Heart right ventricle (tissue), 16 donors: ENCODE measurements at regions of chr12 and their contacts with region 1.

Region 1: GRCh38 chr12:13114251-13115052 is 11.0 kb upstream of the GSG1 start:
- DNase-seq: no peak
- ATAC-seq: peak in 6 of 8 donors; percentile 13 to 45 (median 33)
- H3K4me3 ChIP-seq: no peak overlapping the region
- H3K27ac ChIP-seq: peak overlapping the region in 4 of 10 donors; percentile 9 to 44 (median 31)
- H3K4me1 ChIP-seq: peaks cover 7 to 46% (median 27%) of the 10 kb centered on the region in 9 donors
- H3K27me3 ChIP-seq: no peaks in the 10 kb centered on the region
- CTCF ChIP-seq: no peak

Region 2: DNA sequence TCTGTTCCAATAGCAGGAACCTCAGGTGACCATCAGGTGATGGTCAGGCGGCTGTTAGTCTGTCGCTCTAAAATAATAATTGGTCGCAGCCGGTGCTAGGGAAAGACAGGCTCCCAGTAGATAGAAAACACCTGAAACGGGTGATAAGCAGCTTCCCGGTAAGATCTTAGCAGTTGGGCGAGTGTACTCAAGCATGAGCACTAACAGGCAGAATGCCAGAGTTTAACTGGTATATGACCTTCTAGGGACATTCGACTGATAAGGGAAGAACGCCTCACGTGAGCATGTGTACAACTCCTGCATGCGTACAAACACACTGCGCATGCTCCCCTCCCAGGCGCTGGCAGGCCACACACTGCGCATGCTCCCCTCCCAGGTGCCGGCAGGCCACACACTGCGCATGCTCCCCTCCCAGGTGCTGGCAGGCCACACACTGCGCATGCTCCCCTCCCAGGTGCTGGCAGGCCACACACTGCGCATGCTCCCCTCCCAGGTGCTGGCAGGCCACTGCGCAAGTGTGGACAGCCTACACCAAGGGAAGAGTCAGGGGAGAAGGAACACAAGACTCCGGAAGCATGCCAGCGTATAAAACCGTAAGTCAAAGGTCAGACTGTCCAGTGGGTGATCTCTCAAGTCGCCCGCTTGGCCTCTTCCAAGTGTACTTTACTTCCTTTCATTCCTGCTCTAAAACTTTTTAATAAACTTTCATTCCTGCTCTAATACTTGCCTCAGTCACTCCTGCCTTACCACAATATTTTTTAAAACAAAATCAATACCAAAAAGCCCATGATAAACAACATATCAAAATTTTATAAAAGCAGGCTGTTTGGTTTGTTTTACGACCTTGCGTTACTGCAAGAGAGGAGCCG is 187.0 kb before region 1 on chr12:
- intact Hi-C with region 1: no loop called
- DNase-seq: peak; percentile 53 to 74
- ATAC-seq: peak; percentile 84 to 98 (median 92)
- H3K4me3 ChIP-seq: peak overlapping the region in 7 of 10 donors; percentile 19 to 54 (median 40)
- H3K27ac ChIP-seq: peak overlapping the region in 1 of 10 donors; percentile 56
- H3K4me1 ChIP-seq: peaks cover 0 to 1% (median 0%) of the 10 kb centered on the region in 9 donors
- H3K27me3 ChIP-seq: no peaks in the 10 kb centered on the region
- CTCF ChIP-seq: no peak

Region 3: GRCh38 chr12:13044002-13044905 is 70.2 kb before region 1 on chr12 and contains the start of gene FAM234B:
- intact Hi-C with region 1: no loop called
- DNase-seq: peak; percentile 78 to 88
- ATAC-seq: peak; percentile 95 to 99 (median 98)
- H3K4me3 ChIP-seq: peak within 1 kb of the TSS; percentile 89 to 100 (median 94)
- H3K27ac ChIP-seq: peak within 1 kb of the TSS in 9 of 10 donors; percentile 50 to 85 (median 68)
- H3K4me1 ChIP-seq: peaks cover 0 to 17% (median 11%) of the 10 kb centered on the region in 9 donors
- H3K27me3 ChIP-seq: peaks cover 0 to 7% (median 0%) of the 10 kb centered on the region in 7 donors
- CTCF ChIP-seq: peak in 6 of 9 donors; percentile 11 to 44 (median 29)
- total RNA-seq, gene FAM234B: 1.4 to 3.6 (median 2.5) TPM

Region 4: DNA sequence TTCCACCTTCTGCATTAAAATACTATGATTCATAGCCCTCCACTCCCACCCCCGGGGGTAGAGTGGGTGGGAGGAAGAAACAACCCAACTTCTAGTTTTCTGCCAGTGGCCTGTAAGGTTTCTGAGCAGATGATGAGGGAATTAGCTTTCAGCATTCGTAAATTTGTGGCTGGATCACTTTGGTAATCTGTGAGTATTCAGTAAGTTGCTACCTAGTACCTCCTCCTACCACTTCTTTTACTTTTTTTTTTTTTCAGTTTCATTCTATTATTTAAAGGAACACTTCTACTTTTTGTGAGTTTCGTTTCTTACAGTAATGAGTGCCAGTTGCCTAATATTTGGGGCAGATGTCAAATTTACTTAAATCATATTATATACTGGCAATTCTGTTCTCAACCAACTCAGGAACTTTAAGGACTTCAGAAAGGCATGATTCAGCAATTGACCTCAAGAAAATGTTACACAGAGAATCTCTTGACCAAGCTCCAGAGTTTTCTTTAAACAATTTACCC is 39.6 kb after region 1 on chr12:
- intact Hi-C with region 1: loop called in 1 of 10 experiments (anchors 5 kb)
- DNase-seq: no peak
- ATAC-seq: peak in 1 of 8 donors; percentile 5
- H3K4me3 ChIP-seq: no peak overlapping the region
- H3K27ac ChIP-seq: peak overlapping the region in 4 of 10 donors; percentile 3 to 75 (median 24)
- H3K4me1 ChIP-seq: peaks cover 0 to 25% (median 9%) of the 10 kb centered on the region in 9 donors
- H3K27me3 ChIP-seq: no peaks in the 10 kb centered on the region
- CTCF ChIP-seq: no peak